ENCODE measurements at regions of chr14 and their contacts with region 1.

Region 1: GRCh38 chr14:23478111-23478759 is 8.7 kb downstream of the NGDN start:
- DNase-seq: peak in 1 of 2 donors; percentile 49
- H3K4me3 ChIP-seq: no peak overlapping the region
- CTCF ChIP-seq: no peak
- POLR2A ChIP-seq: no peak

Region 2: GRCh38 chr14:23320774-23321571 is 157.3 kb before region 1 on chr14 and contains the start of gene PABPN1:
- intact Hi-C with region 1: loop called (anchors 10 kb)
- DNase-seq: peak; percentile 100
- H3K4me3 ChIP-seq: peak within 1 kb of the TSS; percentile 67
- CTCF ChIP-seq: no peak
- POLR2A ChIP-seq: no peak
- total RNA-seq, gene PABPN1: 25.5 to 65.8 (median 39.9) TPM

Region 3: DNA sequence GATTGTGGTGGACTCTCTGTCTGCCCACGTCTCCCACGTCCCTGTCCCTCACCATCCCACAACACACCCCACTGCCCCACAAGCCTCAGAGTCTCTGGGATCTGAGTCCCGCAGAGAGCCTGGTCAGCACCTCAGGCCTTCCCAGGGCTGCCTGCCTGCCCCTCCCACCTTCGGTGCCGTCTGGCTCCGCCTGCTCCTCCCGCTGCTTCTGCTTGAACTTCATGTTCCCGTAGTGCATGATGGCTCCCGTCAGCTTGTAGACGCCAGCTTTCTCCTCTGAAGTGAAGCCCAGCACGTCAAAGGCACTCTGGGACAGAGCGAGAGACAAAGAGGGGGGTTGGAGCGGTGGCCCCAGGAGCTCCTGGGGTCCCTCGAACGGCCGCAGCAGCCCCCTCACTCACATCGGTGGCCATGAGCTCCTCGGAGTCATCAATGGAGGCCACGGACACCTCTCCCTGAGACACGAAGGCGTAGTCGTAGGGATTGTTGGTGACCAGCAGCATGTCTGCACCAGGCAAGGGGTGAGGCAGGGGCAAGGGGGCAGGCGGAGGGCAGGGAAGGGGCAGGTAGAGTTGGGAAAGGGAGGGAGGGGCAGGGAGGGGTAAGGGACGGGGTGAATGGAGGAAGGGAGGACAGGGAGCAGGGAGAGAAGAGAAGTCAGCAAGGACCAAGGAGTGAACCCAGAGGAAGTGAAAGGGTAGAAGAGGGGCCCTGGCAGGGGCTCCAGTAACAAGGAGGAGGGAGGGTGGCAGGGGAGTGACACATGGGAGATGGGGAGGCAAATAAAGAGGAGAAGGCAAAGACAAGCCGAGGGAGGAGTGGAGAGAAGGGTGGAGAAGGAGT is 75.7 kb before region 1 on chr14:
- intact Hi-C with region 1: no loop called
- DNase-seq: no peak
- H3K4me3 ChIP-seq: no peak overlapping the region
- CTCF ChIP-seq: no peak
- POLR2A ChIP-seq: no peak

Region 4: GRCh38 chr14:23555882-23556699 is 77.9 kb after region 1 on chr14 and contains the start of gene THTPA:
- intact Hi-C with region 1: loop called (anchors 5 kb)
- DNase-seq: peak; percentile 90 to 98
- H3K4me3 ChIP-seq: peak within 1 kb of the TSS; percentile 74
- CTCF ChIP-seq: no peak
- POLR2A ChIP-seq: no peak
- total RNA-seq, gene THTPA: 2.8 to 10.9 (median 10.7) TPM

Region 5: GRCh38 chr14:23776288-23776687 is 298.1 kb after region 1 on chr14:
- intact Hi-C with region 1: no loop called
- DNase-seq: no peak
- H3K4me3 ChIP-seq: no peak overlapping the region
- CTCF ChIP-seq: no peak
- POLR2A ChIP-seq: no peak

Measured in lower leg skin (tissue), 4 donors.